Activated CD4-positive, alpha-beta memory T cell treated with anti-CD3 and anti-CD28 coated beads, Interleukin-2, amount 10 ng/mL, durations not matched to agents 7 days and 5 days (primary cell): ENCODE measurements at regions of chr2 and their contacts with region 1.

Region 1: DNA sequence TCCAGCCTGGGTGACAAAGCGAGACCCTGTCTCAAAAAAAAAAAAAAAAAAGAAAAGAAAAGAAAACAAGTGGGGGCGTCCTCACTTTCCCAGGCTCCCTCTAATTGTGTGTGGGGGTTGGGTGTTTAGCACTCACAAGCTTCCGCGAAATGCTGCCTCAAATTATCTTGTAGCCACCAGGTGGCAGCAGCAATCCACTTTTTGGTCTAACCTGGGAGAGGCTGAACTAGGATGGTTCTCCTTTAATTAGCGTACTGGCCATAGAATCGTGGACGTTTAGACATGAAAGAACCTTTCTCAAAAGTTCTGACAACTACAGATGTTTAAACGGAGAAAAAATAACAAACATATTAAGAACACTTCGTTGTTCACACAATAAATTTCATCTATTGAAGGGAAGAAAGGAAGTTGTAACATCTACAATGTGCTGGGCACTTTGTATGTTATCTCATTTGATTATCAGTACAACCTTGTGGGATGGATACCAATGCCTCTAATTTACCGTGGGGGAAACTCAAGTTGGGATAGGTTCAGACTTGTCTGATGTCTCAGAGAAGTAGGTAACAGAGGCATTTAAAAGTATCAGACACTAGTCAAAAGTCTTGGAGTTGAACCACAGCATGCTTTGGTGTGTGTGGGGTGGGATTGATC is 122.7 kb upstream of the NABP1 start:
- DNase-seq: peak; percentile 82
- H3K4me3 Mint-ChIP-seq: no peak overlapping the region
- H3K27ac Mint-ChIP-seq: no peak overlapping the region
- H3K4me1 Mint-ChIP-seq: peaks cover 16% of the 10 kb centered on the region
- H3K27me3 Mint-ChIP-seq: peaks cover 15% of the 10 kb centered on the region

Region 2: GRCh38 chr2:191539068-191539467 is 16.1 kb before region 1 on chr2:
- CTCF ChIA-PET with region 1: interaction called, 20 read pairs
- POLR2A ChIA-PET with region 1: no interaction called
- DNase-seq: peak; percentile 30
- H3K4me3 Mint-ChIP-seq: no peak overlapping the region
- H3K27ac Mint-ChIP-seq: no peak overlapping the region
- H3K4me1 Mint-ChIP-seq: no peaks in the 10 kb centered on the region
- H3K27me3 Mint-ChIP-seq: peaks cover 8% of the 10 kb centered on the region